ENCODE measurements at regions of chr16 and their contacts with region 1.

Region 1: GRCh38 chr16:69754469-69755310 is at the start of gene NOB1:
- DNase-seq: peak; percentile 91 to 100 (median 97)
- ATAC-seq: peak; percentile 96 to 98 (median 98)
- H3K4me3 ChIP-seq: peak within 1 kb of the TSS; percentile 99 to 100
- H3K4me3 Mint-ChIP-seq: peak within 1 kb of the TSS; percentile 96 to 100 (median 100)
- H3K27ac ChIP-seq: peak within 1 kb of the TSS; percentile 63
- H3K27ac Mint-ChIP-seq: peak within 1 kb of the TSS; percentile 98 to 99
- H3K4me1 ChIP-seq: peaks cover 8 to 20% of the 10 kb centered on the region in 2 experiments
- H3K4me1 Mint-ChIP-seq: peaks cover 30 to 32% (median 32%) of the 10 kb centered on the region in 3 donors
- H3K27me3 ChIP-seq: no peaks in the 10 kb centered on the region
- H3K27me3 Mint-ChIP-seq: no peaks in the 10 kb centered on the region
- total RNA-seq, gene NOB1: 29.7 to 66.1 (median 60.9) TPM

Region 2: DNA sequence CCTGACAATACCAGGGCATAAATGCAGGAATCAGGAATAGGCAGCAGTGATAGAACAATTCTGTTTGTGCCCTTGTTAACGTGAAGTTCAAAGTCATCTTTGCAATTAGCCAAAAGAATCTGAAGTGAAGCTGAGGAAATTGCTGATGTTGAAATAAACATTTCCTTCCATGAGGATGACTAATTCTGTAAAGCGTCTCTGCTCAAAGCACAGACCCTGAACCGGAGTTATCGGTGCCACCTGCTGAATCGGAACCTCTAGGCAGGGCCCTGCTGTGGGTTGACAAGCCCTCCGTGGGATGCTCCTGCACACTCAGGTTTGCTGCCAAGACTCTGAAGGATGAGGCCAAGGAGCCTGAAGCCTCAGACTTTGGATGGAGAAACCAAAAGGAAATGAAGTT is 1054.6 kb before region 1 on chr16:
- CTCF ChIA-PET with region 1: no interaction called
- POLR2A ChIA-PET with region 1: no interaction called
- DNase-seq: no peak
- ATAC-seq: no peak
- H3K4me3 ChIP-seq: no peak overlapping the region
- H3K4me3 Mint-ChIP-seq: no peak overlapping the region
- H3K27ac ChIP-seq: no peak overlapping the region
- H3K27ac Mint-ChIP-seq: no peak overlapping the region
- H3K4me1 ChIP-seq: peaks cover 0 to 4% of the 10 kb centered on the region in 2 experiments
- H3K4me1 Mint-ChIP-seq: peaks cover 0 to 5% (median 0%) of the 10 kb centered on the region in 3 donors
- H3K27me3 ChIP-seq: peaks cover 0 to 17% of the 10 kb centered on the region in 2 experiments
- H3K27me3 Mint-ChIP-seq: no peaks in the 10 kb centered on the region

Region 3: DNA sequence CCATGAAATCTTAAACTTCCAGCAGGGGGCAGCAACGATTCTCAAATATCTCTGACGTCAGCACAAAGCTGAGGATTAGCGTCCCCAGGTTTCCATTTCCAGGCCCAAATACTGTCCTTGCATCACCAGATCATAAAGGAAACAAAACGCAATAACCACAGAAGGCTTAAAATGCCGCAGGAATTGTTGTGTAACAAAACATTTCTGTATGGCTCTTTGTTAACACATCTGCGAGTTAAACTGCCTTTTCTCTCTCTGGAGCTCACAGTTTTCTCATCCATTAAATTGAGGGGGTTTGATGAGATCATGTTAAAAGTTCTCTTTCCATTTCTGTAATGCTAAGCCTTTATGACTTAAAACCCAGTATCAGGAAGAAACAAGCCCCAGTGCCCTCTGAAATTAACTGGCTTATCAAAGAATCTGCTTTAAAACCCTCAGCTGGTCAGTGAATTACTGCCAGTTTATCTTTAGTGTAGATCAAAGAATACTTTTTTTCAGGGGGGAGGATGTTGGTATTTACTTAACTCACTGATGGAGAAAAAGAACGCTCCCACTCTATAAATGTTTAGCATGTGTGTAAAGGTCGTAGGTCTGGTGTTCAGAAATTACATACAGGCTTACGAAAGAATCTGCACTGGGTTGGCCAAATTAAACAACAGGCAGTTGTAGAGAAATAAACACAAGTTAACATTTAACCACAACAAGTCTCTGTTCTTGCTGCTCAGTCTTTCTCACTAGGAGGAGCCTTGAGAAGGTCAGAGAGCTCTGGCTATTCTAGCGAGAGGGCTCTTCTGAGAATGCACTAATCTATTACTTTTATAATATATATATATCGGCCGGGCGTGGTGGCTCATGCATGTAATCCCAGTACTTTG is 358.3 kb before region 1 on chr16:
- CTCF ChIA-PET with region 1: interaction called in 1 of 2 experiments, 12 read pairs
- POLR2A ChIA-PET with region 1: no interaction called
- DNase-seq: peak; percentile 24 to 88 (median 57)
- ATAC-seq: peak; percentile 58 to 78 (median 68)
- H3K4me3 ChIP-seq: no peak overlapping the region
- H3K4me3 Mint-ChIP-seq: no peak overlapping the region
- H3K27ac ChIP-seq: peak overlapping the region; percentile 21
- H3K27ac Mint-ChIP-seq: no peak overlapping the region
- H3K4me1 ChIP-seq: no peaks in the 10 kb centered on the region
- H3K4me1 Mint-ChIP-seq: peaks cover 0 to 6% (median 5%) of the 10 kb centered on the region in 3 donors
- H3K27me3 ChIP-seq: peaks cover 0 to 4% of the 10 kb centered on the region in 2 experiments
- H3K27me3 Mint-ChIP-seq: no peaks in the 10 kb centered on the region

Region 4: DNA sequence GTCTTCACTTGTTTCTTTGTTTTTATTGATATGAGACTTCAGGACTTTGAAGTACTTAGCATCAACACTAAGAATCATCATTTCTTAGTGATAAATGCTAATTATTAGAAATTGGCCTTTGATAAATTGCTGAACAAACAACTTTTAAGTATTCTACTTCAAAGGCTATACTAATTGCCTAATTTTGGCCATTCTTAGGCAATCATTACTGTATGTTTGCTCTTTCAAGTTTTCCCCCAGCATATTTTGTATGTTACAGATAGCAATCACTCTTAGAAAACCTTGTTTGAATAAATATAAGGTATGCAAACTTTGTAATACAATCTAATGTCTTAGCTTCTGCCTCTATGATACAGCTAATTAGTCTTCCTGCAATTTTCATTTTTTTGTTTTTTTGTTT is 74.3 kb before region 1 on chr16:
- CTCF ChIA-PET with region 1: no interaction called
- POLR2A ChIA-PET with region 1: no interaction called
- DNase-seq: no peak
- ATAC-seq: no peak
- H3K4me3 ChIP-seq: no peak overlapping the region
- H3K4me3 Mint-ChIP-seq: no peak overlapping the region
- H3K27ac ChIP-seq: no peak overlapping the region
- H3K27ac Mint-ChIP-seq: no peak overlapping the region
- H3K4me1 ChIP-seq: no peaks in the 10 kb centered on the region
- H3K4me1 Mint-ChIP-seq: no peaks in the 10 kb centered on the region
- H3K27me3 ChIP-seq: no peaks in the 10 kb centered on the region
- H3K27me3 Mint-ChIP-seq: no peaks in the 10 kb centered on the region

Region 5: GRCh38 chr16:69709456-69710084 is 45.1 kb before region 1 on chr16:
- CTCF ChIA-PET with region 1: interaction called, 6 to 23 read pairs
- POLR2A ChIA-PET with region 1: no interaction called
- DNase-seq: peak in 3 of 35 experiments; percentile 5 to 78 (median 13)
- ATAC-seq: peak in 3 of 4 experiments; percentile 43 to 58 (median 49)
- H3K4me3 ChIP-seq: no peak overlapping the region
- H3K4me3 Mint-ChIP-seq: no peak overlapping the region
- H3K27ac ChIP-seq: no peak overlapping the region
- H3K27ac Mint-ChIP-seq: peak overlapping the region in 1 of 2 donors; percentile 5
- H3K4me1 ChIP-seq: no peaks in the 10 kb centered on the region
- H3K4me1 Mint-ChIP-seq: peaks cover 0 to 4% (median 0%) of the 10 kb centered on the region in 3 donors
- H3K27me3 ChIP-seq: no peaks in the 10 kb centered on the region
- H3K27me3 Mint-ChIP-seq: no peaks in the 10 kb centered on the region

Region 6: DNA sequence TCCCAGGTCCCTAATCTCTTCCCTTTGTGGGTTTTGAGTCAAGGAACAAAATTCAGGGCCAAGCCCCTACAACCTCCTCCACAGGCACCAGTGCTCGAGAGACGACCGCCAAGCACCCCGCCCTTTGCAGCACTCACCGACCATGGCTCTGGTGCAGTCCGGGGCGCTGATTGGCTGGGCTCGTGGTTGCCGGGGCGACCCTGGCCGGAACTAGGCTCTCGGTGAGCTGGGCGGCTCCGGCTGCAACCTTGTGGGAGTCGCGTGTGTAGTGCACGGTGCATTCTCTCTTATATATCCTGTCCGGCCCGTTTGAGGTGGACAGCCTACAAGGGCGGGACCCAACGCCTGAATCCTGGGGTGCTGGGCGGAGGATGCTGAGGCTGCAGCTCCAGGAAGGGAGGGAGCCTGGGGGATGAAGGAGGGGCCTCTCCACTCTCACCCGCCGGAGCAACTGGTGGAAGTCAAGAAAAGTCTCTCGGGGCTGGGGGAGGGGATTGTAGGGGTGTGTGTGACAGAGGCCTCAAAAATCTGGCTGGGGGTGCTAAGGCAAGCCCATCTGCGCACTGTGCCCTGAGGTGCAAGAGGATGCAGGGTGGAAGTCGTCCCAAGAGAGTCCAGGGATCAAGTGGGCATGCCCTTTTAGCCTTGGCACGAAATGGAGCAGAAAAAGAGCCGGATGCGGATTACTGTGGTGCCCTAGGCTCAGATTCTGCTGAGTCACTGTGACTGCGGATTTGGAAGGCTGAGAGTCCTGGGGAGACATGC is 28.2 kb before region 1 on chr16 and contains the start of gene NQO1:
- CTCF ChIA-PET with region 1: interaction called in 1 of 2 experiments, 10 read pairs
- POLR2A ChIA-PET with region 1: interaction called, 3 to 7 read pairs
- DNase-seq: peak; percentile 61 to 89 (median 75)
- ATAC-seq: peak; percentile 97 to 99 (median 98)
- H3K4me3 ChIP-seq: peak within 1 kb of the TSS; percentile 59 to 71
- H3K4me3 Mint-ChIP-seq: peak within 1 kb of the TSS; percentile 92 to 97 (median 95)
- H3K27ac ChIP-seq: peak within 1 kb of the TSS; percentile 53
- H3K27ac Mint-ChIP-seq: peak within 1 kb of the TSS; percentile 95 to 97
- H3K4me1 ChIP-seq: peaks cover 5 to 24% of the 10 kb centered on the region in 2 experiments
- H3K4me1 Mint-ChIP-seq: peaks cover 25 to 28% (median 27%) of the 10 kb centered on the region in 3 donors
- H3K27me3 ChIP-seq: no peaks in the 10 kb centered on the region
- H3K27me3 Mint-ChIP-seq: no peaks in the 10 kb centered on the region
- total RNA-seq, gene NQO1: 1.4 to 6.1 (median 4.1) TPM

Region 7: GRCh38 chr16:70267516-70267915 is 512.8 kb after region 1 on chr16:
- CTCF ChIA-PET with region 1: no interaction called
- POLR2A ChIA-PET with region 1: no interaction called
- DNase-seq: peak in 8 of 35 experiments; percentile 9 to 57 (median 18)
- ATAC-seq: no peak
- H3K4me3 ChIP-seq: no peak overlapping the region
- H3K4me3 Mint-ChIP-seq: no peak overlapping the region
- H3K27ac ChIP-seq: no peak overlapping the region
- H3K27ac Mint-ChIP-seq: peak overlapping the region in 1 of 2 donors; percentile 44
- H3K4me1 ChIP-seq: no peaks in the 10 kb centered on the region
- H3K4me1 Mint-ChIP-seq: no peaks in the 10 kb centered on the region
- H3K27me3 ChIP-seq: no peaks in the 10 kb centered on the region
- H3K27me3 Mint-ChIP-seq: no peaks in the 10 kb centered on the region

Measured in T-cell (primary cell).